Activated CD4-positive, alpha-beta T cell treated with anti-CD3 and anti-CD28 coated beads, Interleukin-2, amount 10 ng/mL, durations not matched to agents 24 days and 14 days (primary cell): ENCODE measurements at regions of chr17 and their contacts with region 1.

Region 1: DNA sequence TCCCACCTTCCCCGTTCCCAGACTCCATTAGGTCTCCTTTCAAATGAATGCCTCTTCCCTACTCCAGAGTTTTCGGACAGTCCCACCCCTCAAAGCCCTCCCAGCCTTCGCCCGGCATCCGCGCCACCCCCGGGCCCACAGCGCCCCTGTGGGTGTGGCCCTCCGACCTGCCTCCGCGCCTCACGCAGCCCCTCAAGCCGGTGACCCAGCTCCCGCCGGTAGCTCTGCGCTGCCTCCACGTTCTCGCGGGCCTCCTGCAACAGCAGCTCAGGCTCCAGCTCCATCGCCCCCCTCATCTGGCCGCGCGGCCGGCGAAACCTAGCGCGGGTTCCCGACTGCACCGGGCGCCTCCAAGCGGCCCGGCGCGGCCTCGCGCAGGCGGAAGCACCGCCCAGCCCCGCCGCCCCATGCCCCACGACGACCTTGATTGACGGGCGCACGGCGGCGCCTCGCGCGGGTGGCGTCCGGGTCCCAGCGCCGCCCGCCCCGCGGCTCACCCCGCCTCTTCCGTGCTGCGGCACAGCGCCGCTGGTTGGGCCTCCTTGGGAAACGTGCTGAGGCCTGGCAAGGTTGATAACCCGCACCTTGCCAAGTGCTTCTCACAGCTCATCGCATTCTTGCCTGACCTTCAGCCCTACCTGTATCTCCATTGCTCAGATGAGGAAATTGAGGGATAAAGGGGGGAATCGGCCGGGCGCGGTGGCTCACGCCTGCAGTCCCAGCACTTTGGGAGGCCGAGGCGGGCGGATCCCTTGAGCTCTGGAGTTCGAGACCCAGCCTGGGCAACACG is at the start of gene CRLF3:
- DNase-seq: peak; percentile 97
- H3K4me3 Mint-ChIP-seq: peak within 1 kb of the TSS; percentile 94
- H3K27ac Mint-ChIP-seq: peak within 1 kb of the TSS; percentile 95
- H3K4me1 Mint-ChIP-seq: peaks cover 31% of the 10 kb centered on the region
- H3K27me3 Mint-ChIP-seq: no peaks in the 10 kb centered on the region
- total RNA-seq, gene CRLF3: 43.2 and 46.4 TPM in 2 replicates

Region 2: GRCh38 chr17:30116661-30117551 is 707.6 kb before region 1 on chr17 and contains the start of gene NSRP1:
- intact Hi-C with region 1: loop called (anchors 10 kb)
- DNase-seq: peak; percentile 98
- H3K4me3 Mint-ChIP-seq: peak within 1 kb of the TSS; percentile 96
- H3K27ac Mint-ChIP-seq: peak within 1 kb of the TSS; percentile 96
- H3K4me1 Mint-ChIP-seq: peaks cover 45% of the 10 kb centered on the region
- H3K27me3 Mint-ChIP-seq: no peaks in the 10 kb centered on the region
- total RNA-seq, gene NSRP1: 29.8 and 31.7 TPM in 2 replicates

Region 3: GRCh38 chr17:30701498-30701989 is 123.0 kb before region 1 on chr17:
- intact Hi-C with region 1: no loop called
- DNase-seq: no peak
- H3K4me3 Mint-ChIP-seq: no peak overlapping the region
- H3K27ac Mint-ChIP-seq: no peak overlapping the region
- H3K4me1 Mint-ChIP-seq: peaks cover 8% of the 10 kb centered on the region
- H3K27me3 Mint-ChIP-seq: peaks cover 37% of the 10 kb centered on the region

Region 4: DNA sequence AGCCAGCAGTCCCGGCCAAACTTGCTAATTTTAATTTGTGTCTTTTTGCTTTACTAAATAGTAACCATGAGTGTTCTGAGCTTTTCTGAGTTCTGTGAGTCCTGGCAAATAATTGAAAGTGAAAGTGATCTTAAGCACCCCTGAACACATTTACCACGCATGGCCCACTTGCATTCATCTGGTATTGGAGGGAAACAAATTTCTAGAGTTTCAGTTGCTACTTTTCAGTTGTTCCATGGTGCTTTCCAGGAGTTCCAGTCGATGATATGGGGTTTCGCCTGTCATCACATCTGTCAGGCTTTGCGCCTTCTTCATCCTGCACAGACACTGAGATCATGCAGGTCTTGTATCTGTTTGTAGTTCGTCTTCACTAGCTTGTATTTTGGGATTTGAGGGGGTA is 44.2 kb before region 1 on chr17:
- intact Hi-C with region 1: loop called (anchors 5 kb)
- DNase-seq: peak; percentile 71
- H3K4me3 Mint-ChIP-seq: peak overlapping the region; percentile 57
- H3K27ac Mint-ChIP-seq: peak overlapping the region; percentile 96
- H3K4me1 Mint-ChIP-seq: peaks cover 10% of the 10 kb centered on the region
- H3K27me3 Mint-ChIP-seq: no peaks in the 10 kb centered on the region

Region 5: DNA sequence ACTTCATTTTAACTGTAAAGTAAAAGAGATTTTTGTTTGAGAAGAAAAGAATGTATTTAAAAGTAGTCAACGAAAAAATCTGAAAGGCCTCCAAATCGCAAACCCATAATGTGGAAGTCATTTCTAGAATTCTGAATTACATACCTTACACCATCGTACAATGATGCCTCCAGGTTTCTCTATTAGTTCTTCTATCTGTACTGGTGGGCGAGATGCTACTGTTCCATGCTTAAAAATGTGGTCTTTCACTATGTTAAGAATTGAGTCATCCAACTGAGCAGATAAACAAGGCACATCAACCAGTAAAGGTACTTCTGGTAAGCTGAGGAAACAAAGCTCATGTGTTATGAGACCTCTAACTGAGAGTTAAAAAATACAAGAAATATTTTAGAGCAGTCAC is 28.5 kb before region 1 on chr17:
- intact Hi-C with region 1: loop called (anchors 1 kb)
- DNase-seq: no peak
- H3K4me3 Mint-ChIP-seq: no peak overlapping the region
- H3K27ac Mint-ChIP-seq: peak overlapping the region; percentile 81
- H3K4me1 Mint-ChIP-seq: peaks cover 15% of the 10 kb centered on the region
- H3K27me3 Mint-ChIP-seq: no peaks in the 10 kb centered on the region

Region 6: GRCh38 chr17:30808785-30809286 is 15.7 kb before region 1 on chr17:
- intact Hi-C with region 1: loop called (anchors 1 kb)
- DNase-seq: peak; percentile 87
- H3K4me3 Mint-ChIP-seq: peak overlapping the region; percentile 87
- H3K27ac Mint-ChIP-seq: peak overlapping the region; percentile 87
- H3K4me1 Mint-ChIP-seq: peaks cover 54% of the 10 kb centered on the region
- H3K27me3 Mint-ChIP-seq: no peaks in the 10 kb centered on the region

Region 7: DNA sequence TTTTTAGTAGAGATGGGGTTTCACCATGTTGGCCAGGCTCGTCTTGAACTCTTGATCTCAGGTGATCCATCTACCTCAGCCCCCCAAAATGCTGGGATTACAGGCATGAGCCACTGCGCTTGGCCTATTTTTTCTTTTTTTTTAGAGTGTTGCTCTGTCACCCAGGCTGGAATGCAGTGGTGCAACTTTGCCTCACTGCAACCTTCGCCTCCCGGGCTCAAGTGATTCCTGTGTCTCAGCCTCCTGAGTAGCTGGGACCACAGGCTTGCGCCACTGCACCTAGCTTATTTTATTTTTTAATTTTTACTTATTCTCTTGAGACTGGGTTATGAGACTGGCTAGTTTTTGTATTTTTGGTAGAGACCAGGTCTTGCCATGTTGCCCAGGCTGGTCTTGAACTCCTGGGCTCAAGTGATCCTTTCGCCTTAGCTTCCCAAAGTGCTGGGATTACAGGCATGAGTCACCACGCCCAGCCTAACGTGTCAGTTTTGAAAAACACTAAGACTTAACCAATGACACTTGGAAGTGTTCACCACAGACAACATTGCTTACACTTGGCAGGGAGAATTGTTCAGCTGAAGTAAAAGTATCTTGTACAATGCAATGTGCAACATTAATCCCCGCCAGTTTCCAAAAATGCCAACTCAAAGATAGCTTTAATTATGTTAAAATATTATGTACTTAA is 34.2 kb after region 1 on chr17:
- intact Hi-C with region 1: no loop called
- DNase-seq: no peak
- H3K4me3 Mint-ChIP-seq: no peak overlapping the region
- H3K27ac Mint-ChIP-seq: no peak overlapping the region
- H3K4me1 Mint-ChIP-seq: no peaks in the 10 kb centered on the region
- H3K27me3 Mint-ChIP-seq: no peaks in the 10 kb centered on the region

Region 8: GRCh38 chr17:31321481-31321880 is 496.9 kb after region 1 on chr17 and contains the start of gene EVI2A:
- intact Hi-C with region 1: loop called (anchors 10 kb)
- DNase-seq: peak; percentile 94
- H3K4me3 Mint-ChIP-seq: peak within 1 kb of the TSS; percentile 89
- H3K27ac Mint-ChIP-seq: peak within 1 kb of the TSS; percentile 97
- H3K4me1 Mint-ChIP-seq: peaks cover 26% of the 10 kb centered on the region
- H3K27me3 Mint-ChIP-seq: no peaks in the 10 kb centered on the region
- total RNA-seq, gene EVI2A: 30.4 and 31.5 TPM in 2 replicates